GM12878 (cell line): ENCODE measurements at regions of chr9 and their contacts with region 1.

Region 1: DNA sequence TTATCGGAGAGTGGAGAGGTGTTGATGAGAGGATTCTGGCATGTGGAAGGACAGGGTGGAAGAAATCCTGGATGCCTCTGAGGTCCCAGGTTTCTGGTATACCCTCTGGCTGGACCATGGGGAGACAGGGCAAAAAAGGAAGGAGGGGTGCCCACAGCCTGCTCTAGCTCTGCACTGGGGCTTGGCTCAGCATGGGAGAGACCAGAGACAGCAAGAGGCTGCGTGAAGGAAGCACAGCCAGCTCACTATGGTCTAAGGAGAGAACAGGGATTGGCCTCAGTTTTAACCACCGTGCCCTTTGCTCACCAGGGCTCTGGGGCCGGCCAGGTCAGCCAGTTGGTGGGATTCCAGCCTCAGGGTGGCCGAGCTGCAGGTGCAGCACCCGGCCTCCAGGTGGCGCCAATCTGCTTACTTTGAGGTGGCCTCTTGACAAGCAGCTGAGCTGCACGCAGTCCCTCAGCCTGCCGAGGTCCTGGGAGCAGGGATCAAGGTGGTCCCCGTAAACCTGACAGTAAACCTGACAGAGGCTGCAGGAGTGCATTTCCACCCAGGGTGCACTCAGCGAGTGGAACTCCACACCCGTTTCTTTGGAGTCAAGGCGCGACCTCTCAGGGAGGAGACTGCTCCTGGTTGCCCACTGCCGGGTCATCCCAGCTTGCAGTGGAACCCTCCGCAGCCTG is 25.0 kb upstream of the SPTLC1 start:
- DNase-seq: no peak
- ATAC-seq: peak; percentile 84
- H3K4me3 ChIP-seq: no peak overlapping the region
- H3K27ac ChIP-seq: no peak overlapping the region
- H3K4me1 ChIP-seq: no peaks in the 10 kb centered on the region; the same call in 1 of the 2 replicates
- H3K27me3 ChIP-seq: peaks cover 0 to 4% of the 10 kb centered on the region in 2 experiments; a peak in 3 of 4 replicates
- CTCF ChIP-seq: peak; percentile 92 to 98 (median 94)
- EP300 ChIP-seq: no peak
- POLR2A ChIP-seq: no peak
- RAD21 ChIP-seq: peak; percentile 82

Region 2: GRCh38 chr9:92165484-92165883 is 25.3 kb after region 1 on chr9:
- CTCF ChIA-PET with region 1: interaction called, 12 read pairs
- POLR2A ChIA-PET with region 1: no interaction called
- RAD21 ChIA-PET with region 1: no interaction called
- SMC1A ChIA-PET with region 1: no interaction called
- in situ Hi-C with region 1: no loop called
- intact Hi-C with region 1: no loop called
- DNase-seq: no peak
- ATAC-seq: peak; percentile 94
- H3K4me3 ChIP-seq: no peak overlapping the region
- H3K27ac ChIP-seq: no peak overlapping the region
- H3K4me1 ChIP-seq: no peaks in the 10 kb centered on the region; the same call in none of the 2 replicates
- H3K27me3 ChIP-seq: no peaks in the 10 kb centered on the region
- CTCF ChIP-seq: no peak
- EP300 ChIP-seq: no peak
- POLR2A ChIP-seq: no peak
- RAD21 ChIP-seq: no peak

Region 3: DNA sequence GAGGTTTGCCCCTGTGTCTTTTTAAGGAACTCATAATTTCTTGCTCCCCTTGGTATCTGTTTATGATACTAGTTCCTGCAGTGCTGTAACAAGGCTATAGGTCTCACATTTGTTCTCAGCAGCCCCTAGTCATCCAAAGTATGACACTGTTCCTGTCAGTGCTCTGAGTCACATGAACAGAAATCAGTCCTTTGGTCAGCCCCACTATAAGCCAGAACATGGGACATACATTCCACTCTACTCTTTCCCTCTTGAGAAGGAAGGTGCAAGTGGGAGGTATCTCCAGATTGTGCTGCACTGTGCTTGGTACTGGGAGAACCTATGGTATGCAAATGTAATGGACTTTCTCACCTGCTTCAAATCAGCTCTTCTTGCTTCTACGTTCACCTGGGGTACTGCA is 66.3 kb after region 1 on chr9:
- CTCF ChIA-PET with region 1: interaction called, 41 read pairs
- POLR2A ChIA-PET with region 1: no interaction called
- RAD21 ChIA-PET with region 1: interaction called, 11 read pairs
- SMC1A ChIA-PET with region 1: interaction called, 3 read pairs
- in situ Hi-C with region 1: no loop called
- intact Hi-C with region 1: no loop called
- DNase-seq: no peak
- ATAC-seq: no peak
- H3K4me3 ChIP-seq: no peak overlapping the region
- H3K27ac ChIP-seq: no peak overlapping the region
- H3K4me1 ChIP-seq: no peaks in the 10 kb centered on the region
- H3K27me3 ChIP-seq: no peaks in the 10 kb centered on the region
- CTCF ChIP-seq: no peak
- EP300 ChIP-seq: no peak
- POLR2A ChIP-seq: no peak
- RAD21 ChIP-seq: no peak

Region 4: GRCh38 chr9:92242260-92243136 is 102.3 kb after region 1 on chr9:
- CTCF ChIA-PET with region 1: interaction called, 55 read pairs
- POLR2A ChIA-PET with region 1: no interaction called
- RAD21 ChIA-PET with region 1: interaction called, 20 read pairs
- SMC1A ChIA-PET with region 1: interaction called, 11 read pairs
- in situ Hi-C with region 1: no loop called
- intact Hi-C with region 1: loop called (anchors 5 kb)
- DNase-seq: no peak
- ATAC-seq: no peak
- H3K4me3 ChIP-seq: no peak overlapping the region
- H3K27ac ChIP-seq: no peak overlapping the region
- H3K4me1 ChIP-seq: no peaks in the 10 kb centered on the region
- H3K27me3 ChIP-seq: no peaks in the 10 kb centered on the region
- CTCF ChIP-seq: peak in 2 of 3 experiments; percentile 8 to 18; a peak in 1 of 6 replicates
- EP300 ChIP-seq: no peak
- POLR2A ChIP-seq: no peak
- RAD21 ChIP-seq: peak; percentile 37

Region 5: DNA sequence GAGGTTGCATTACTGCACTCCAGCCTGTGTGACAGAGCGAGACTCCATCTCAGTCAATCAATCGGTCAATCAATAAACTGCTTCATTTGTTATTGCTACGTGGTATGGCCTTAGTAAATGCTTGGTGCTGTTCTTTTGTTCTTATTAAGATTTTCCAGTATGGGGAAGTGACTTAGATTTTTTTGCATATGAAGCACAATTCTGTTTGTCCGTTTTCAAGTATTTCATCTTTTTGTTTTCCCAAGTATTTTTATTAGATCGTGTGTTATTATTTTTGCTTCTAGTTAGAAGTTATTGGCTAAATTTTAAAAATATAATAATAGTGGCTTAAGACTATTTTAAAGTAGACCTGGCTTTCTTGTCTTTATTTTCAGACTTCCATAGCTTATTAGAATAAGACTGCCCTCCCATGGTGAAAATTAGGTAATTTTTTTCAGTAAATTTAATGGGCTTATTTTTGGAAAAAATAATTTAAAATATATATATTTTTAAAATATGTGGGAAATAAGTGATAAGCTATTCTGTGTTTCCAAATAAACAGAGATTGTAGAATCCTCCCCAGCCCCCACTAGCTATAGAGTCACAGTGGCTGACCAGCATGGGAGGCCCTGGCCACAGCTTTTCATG is 298.8 kb after region 1 on chr9:
- CTCF ChIA-PET with region 1: interaction called, 35 read pairs
- POLR2A ChIA-PET with region 1: no interaction called
- RAD21 ChIA-PET with region 1: interaction called, 9 read pairs
- SMC1A ChIA-PET with region 1: interaction called, 8 read pairs
- in situ Hi-C with region 1: loop called (anchors 5 kb)
- intact Hi-C with region 1: no loop called
- DNase-seq: no peak
- ATAC-seq: no peak
- H3K4me3 ChIP-seq: no peak overlapping the region
- H3K27ac ChIP-seq: no peak overlapping the region
- H3K4me1 ChIP-seq: no peaks in the 10 kb centered on the region
- H3K27me3 ChIP-seq: no peaks in the 10 kb centered on the region
- CTCF ChIP-seq: no peak; a peak in 1 of 6 replicates
- EP300 ChIP-seq: no peak
- POLR2A ChIP-seq: no peak
- RAD21 ChIP-seq: peak; percentile 35; the same call in 1 of the 2 replicates

Region 6: GRCh38 chr9:92525306-92525705 is 385.1 kb after region 1 on chr9:
- CTCF ChIA-PET with region 1: no interaction called
- POLR2A ChIA-PET with region 1: no interaction called
- RAD21 ChIA-PET with region 1: no interaction called
- SMC1A ChIA-PET with region 1: no interaction called
- in situ Hi-C with region 1: no loop called
- intact Hi-C with region 1: no loop called
- DNase-seq: no peak
- ATAC-seq: no peak
- H3K4me3 ChIP-seq: no peak overlapping the region
- H3K27ac ChIP-seq: no peak overlapping the region
- H3K4me1 ChIP-seq: no peaks in the 10 kb centered on the region
- H3K27me3 ChIP-seq: no peaks in the 10 kb centered on the region
- CTCF ChIP-seq: no peak
- EP300 ChIP-seq: no peak
- POLR2A ChIP-seq: no peak
- RAD21 ChIP-seq: no peak

Region 7: DNA sequence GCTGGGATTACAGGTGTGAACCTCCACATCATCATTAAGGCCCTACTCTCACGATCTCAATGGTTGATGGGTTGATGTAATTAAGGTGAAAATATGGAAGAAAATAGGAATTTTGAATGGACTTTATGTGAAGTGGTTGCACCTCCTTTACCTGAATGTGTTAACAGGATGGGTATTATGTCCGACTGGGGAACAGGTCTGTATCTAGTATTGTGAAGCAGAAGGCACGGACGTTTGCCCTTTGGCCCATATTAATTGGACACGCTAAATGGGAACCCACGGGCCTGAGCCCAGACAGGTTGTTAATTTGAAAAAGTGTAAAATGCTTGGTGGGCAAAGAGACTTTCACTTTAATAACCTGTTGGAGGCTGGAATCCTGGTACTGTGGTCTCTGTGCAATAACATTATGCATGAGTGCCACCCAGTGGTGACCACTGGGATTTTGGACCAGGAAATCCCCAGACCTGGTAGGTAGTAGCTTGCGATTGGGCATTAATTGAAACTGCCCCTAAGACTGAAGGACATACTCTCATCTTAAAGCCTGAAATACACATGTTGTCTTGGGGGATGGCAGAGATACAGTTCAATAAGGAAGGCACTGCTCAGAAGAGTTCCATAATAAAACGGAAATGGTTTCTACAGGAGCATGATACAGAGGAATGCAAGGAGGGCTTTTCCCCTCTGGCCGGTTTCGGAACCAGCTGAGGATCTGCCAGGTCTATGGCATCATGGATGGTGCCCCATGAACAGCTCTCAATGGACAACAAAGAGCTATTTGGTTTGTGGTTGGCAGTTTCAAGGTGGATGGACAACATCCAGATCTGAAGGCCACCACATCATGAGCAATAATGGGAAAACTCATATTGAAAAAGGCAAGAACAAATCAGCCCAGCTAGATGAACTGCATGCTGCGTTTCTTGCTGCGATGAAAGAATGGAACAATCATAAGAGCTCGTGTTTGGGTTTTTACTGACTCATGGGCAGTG is 650.6 kb after region 1 on chr9:
- CTCF ChIA-PET with region 1: interaction called, 32 read pairs
- POLR2A ChIA-PET with region 1: no interaction called
- RAD21 ChIA-PET with region 1: interaction called, 19 read pairs
- SMC1A ChIA-PET with region 1: interaction called, 10 read pairs
- in situ Hi-C with region 1: loop called (anchors 5 kb)
- intact Hi-C with region 1: loop called (anchors 5 kb)
- DNase-seq: peak; percentile 49
- ATAC-seq: peak; percentile 95
- H3K4me3 ChIP-seq: no peak overlapping the region
- H3K27ac ChIP-seq: no peak overlapping the region
- H3K4me1 ChIP-seq: peaks cover 6% of the 10 kb centered on the region; the same call in 1 of the 2 replicates
- H3K27me3 ChIP-seq: peaks cover 3 to 5% of the 10 kb centered on the region in 2 experiments
- CTCF ChIP-seq: peak; percentile 72 to 93 (median 85)
- EP300 ChIP-seq: no peak
- POLR2A ChIP-seq: no peak
- RAD21 ChIP-seq: peak; percentile 95